Natural killer cell (primary cell): ENCODE measurements at regions of chr12 and their contacts with region 1.

Region 1: DNA sequence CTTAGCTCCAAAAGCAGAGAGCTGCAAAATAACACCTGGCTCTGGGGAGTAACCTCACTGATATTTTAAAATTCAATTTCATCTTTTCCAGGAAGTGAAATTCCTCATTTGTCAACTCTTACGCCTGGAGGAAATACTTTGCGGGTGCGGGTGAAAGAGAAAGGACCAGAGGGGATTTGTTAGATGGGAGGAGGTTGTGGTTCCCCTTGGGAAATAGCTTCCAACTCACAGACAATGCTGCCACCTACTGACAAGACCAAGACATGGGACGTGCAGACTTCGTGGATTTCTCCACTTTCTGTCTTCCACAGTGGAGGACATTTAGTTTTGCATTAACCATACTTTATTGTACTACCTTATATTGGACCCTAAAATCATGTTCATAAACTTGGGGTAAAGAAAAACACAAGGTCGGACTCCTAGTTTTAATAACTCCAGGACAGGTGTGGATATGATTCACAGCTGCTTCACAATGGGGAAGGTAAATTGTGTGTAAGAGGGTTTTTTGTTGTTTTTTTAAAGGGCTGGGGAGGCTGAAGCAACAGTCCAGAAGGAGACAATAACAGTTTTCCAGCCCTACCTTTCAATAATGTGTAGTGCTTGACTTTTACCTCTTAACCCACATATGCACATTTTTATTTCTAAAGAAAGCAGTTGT is 10.8 kb downstream of the FBXL14 start:
- DNase-seq: peak; percentile 39 to 89
- ATAC-seq: peak; percentile 76 to 93 (median 87)
- H3K4me3 ChIP-seq: no peak overlapping the region
- H3K4me3 Mint-ChIP-seq: no peak overlapping the region
- H3K27ac ChIP-seq: no peak overlapping the region
- H3K27ac Mint-ChIP-seq: no peak overlapping the region
- H3K4me1 ChIP-seq: peaks cover 4% of the 10 kb centered on the region
- H3K4me1 Mint-ChIP-seq: peaks cover 17 to 21% of the 10 kb centered on the region in 2 donors
- H3K27me3 ChIP-seq: no peaks in the 10 kb centered on the region
- H3K27me3 Mint-ChIP-seq: no peaks in the 10 kb centered on the region
- CTCF ChIP-seq: peak; percentile 88

Region 2: DNA sequence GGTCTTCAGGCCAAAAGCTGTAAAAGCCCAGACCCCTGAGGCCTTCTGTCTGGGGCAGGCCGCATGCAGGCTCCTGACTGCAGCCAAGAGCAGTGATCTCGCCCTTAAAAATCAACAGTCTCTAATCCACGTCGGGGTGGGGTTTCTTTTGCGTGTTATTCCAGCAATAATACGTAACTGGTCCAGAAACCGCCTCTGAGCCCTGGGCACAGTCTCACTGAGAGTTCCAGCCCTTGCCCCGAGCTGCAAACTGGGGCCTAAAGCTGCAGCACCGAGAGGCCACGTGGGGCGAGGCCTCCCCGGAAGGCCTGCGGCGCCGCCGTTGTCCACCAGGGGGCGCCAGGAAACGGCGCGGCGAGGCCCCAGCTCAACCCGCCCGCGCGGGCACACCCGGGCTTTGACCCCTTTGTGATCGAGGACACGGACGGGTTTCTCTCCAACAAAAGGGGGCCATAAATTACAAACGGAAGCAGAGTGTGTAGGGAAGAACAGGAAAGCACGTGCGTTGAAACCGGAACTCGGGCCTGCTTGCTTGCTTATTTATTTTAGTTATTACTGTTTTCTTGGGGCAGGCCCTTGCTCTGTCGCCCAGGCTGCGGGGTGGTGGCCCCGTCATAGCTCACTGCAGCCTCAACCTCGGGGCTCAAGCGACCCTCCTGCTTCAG is 1007.5 kb before region 1 on chr12:
- intact Hi-C with region 1: loop called (anchors 2 kb)
- DNase-seq: peak; percentile 88 to 90
- ATAC-seq: peak; percentile 96 to 100 (median 96)
- H3K4me3 ChIP-seq: peak overlapping the region; percentile 14
- H3K4me3 Mint-ChIP-seq: peak overlapping the region; percentile 80
- H3K27ac ChIP-seq: no peak overlapping the region
- H3K27ac Mint-ChIP-seq: peak overlapping the region in 1 of 2 donors; percentile 72
- H3K4me1 ChIP-seq: peaks cover 13% of the 10 kb centered on the region
- H3K4me1 Mint-ChIP-seq: peaks cover 6 to 19% of the 10 kb centered on the region in 2 donors
- H3K27me3 ChIP-seq: no peaks in the 10 kb centered on the region
- H3K27me3 Mint-ChIP-seq: peaks cover 0 to 6% of the 10 kb centered on the region in 2 donors
- CTCF ChIP-seq: peak; percentile 98

Region 3: DNA sequence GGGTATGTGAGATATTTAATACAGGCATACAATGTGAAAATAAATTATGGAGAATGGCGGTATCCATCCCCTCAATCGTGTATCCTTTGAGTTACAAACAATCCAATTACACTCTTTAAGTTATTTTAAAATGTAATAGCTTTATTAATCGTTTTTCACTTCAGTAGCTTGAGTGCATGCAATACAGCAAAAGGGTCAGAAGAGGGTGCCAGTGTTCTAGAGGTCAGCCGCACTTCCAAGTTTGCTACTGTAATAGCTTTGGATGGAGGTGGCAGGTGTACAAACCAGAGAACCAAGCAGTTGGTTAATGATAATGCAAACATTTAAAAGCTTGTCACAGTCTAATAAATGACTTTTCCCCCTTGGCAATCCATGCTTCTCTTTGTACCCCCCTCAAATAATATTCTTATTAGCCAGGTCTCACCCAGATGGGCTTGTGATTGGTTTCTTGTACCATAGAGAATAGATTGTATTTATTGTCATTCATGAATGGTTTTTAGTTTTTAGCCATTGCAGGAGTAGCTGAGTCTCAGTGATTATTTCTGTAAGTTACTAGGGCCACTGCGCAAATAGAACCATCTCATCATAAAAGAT is 465.5 kb before region 1 on chr12:
- intact Hi-C with region 1: loop called (anchors 1 kb)
- DNase-seq: peak; percentile 57 to 89
- ATAC-seq: peak; percentile 74 to 89 (median 85)
- H3K4me3 ChIP-seq: no peak overlapping the region
- H3K4me3 Mint-ChIP-seq: no peak overlapping the region
- H3K27ac ChIP-seq: no peak overlapping the region
- H3K27ac Mint-ChIP-seq: no peak overlapping the region
- H3K4me1 ChIP-seq: peaks cover 4% of the 10 kb centered on the region
- H3K4me1 Mint-ChIP-seq: peaks cover 6 to 7% of the 10 kb centered on the region in 2 donors
- H3K27me3 ChIP-seq: no peaks in the 10 kb centered on the region
- H3K27me3 Mint-ChIP-seq: no peaks in the 10 kb centered on the region
- CTCF ChIP-seq: peak; percentile 97

Region 4: DNA sequence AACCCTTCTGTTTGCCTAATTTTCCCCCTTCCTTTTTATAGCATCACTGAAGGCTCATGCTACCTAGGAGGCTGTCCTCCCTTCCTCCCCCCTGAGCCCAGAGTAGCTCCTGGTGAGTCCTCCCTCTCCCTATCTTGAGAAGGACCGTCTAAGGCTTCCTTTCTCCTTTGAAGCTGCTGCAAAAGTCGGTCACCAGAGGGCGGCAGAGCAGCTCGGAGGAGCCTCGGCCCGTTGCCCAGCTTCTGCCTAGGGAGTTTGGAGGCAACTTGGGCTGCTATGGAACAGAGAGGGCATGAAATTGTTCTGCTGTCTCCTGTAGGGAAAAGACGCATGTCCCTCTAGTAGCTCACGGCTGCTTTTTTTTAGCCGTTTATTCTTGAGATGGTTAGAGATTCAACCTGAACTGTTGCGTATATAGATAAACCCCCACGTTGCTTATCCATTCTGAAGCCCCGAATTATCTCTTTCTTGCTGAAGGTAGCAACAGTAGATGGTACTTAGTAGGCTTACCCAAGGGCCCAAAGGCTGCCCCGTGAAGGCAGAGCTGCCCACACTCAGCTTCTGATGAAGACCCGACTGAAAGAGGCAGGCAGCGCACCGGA is 51.1 kb after region 1 on chr12:
- intact Hi-C with region 1: no loop called
- DNase-seq: peak; percentile 45 to 76
- ATAC-seq: peak; percentile 73 to 80 (median 80)
- H3K4me3 ChIP-seq: no peak overlapping the region
- H3K4me3 Mint-ChIP-seq: no peak overlapping the region
- H3K27ac ChIP-seq: no peak overlapping the region
- H3K27ac Mint-ChIP-seq: no peak overlapping the region
- H3K4me1 ChIP-seq: peaks cover 15% of the 10 kb centered on the region
- H3K4me1 Mint-ChIP-seq: peaks cover 0 to 14% of the 10 kb centered on the region in 2 donors
- H3K27me3 ChIP-seq: peaks cover 17% of the 10 kb centered on the region
- H3K27me3 Mint-ChIP-seq: peaks cover 35 to 55% of the 10 kb centered on the region in 2 donors
- CTCF ChIP-seq: peak; percentile 63

Region 5: GRCh38 chr12:2023365-2023764 is 439.8 kb after region 1 on chr12:
- intact Hi-C with region 1: no loop called
- DNase-seq: no peak
- ATAC-seq: no peak
- H3K4me3 ChIP-seq: no peak overlapping the region
- H3K4me3 Mint-ChIP-seq: no peak overlapping the region
- H3K27ac ChIP-seq: no peak overlapping the region
- H3K27ac Mint-ChIP-seq: no peak overlapping the region
- H3K4me1 ChIP-seq: no peaks in the 10 kb centered on the region
- H3K4me1 Mint-ChIP-seq: no peaks in the 10 kb centered on the region
- H3K27me3 ChIP-seq: peaks cover 4% of the 10 kb centered on the region
- H3K27me3 Mint-ChIP-seq: peaks cover 20 to 26% of the 10 kb centered on the region in 2 donors
- CTCF ChIP-seq: no peak